ENCODE measurements at regions of chr11 and their contacts with region 1.

Region 1: DNA sequence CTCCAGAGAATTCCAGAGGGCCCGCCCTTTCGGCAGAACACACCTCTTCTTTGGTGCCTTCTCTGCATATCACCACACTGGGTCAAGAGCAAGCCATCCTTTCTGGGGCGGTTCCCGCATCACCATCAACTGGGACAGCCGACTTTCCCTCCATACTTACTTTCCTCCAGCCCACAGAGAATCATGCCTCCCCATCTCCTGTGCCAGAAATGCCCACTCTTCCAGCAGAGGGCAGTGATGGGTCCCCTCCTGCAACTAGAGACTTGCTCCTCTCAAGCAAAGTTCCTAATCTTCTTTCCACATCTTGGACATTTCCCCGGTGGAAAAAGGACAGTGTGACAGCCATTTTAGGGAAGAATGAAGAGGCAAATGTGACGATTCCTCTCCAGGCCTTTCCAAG is 157.7 kb downstream of the C11orf91 start:
- DNase-seq: peak; percentile 37 to 63
- ATAC-seq: peak; percentile 56 to 81 (median 72)
- H3K4me3 ChIP-seq: no peak overlapping the region
- H3K27ac ChIP-seq: no peak overlapping the region
- H3K4me1 ChIP-seq: no peaks in the 10 kb centered on the region
- H3K27me3 ChIP-seq: peaks cover 0 to 3% (median 0%) of the 10 kb centered on the region in 3 donors
- CTCF ChIP-seq: peak; percentile 65

Region 2: GRCh38 chr11:33067289-33067688 is 475.6 kb before region 1 on chr11:
- intact Hi-C with region 1: no loop called
- DNase-seq: no peak
- ATAC-seq: no peak
- H3K4me3 ChIP-seq: no peak overlapping the region
- H3K27ac ChIP-seq: no peak overlapping the region
- H3K4me1 ChIP-seq: no peaks in the 10 kb centered on the region
- H3K27me3 ChIP-seq: no peaks in the 10 kb centered on the region
- CTCF ChIP-seq: no peak

Region 3: DNA sequence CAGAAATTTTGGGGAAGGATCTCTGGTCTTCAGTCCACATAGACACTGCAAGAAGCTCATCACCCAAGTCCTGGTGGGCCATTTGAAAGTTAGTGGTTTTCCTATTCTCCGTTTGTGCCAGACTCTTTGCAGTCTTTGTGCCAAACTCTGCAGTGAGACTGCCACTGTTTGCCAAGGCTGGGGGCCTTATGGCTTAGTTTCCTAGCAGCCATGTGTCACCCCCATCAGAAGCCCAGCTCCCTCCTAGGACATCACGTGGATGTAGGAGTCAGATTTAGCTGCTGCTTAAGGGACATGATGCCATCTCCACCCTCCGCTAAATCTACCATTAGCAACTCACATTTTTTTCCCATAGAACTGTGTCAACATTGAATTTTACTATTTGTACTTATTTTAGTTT is 62.3 kb before region 1 on chr11:
- intact Hi-C with region 1: no loop called
- DNase-seq: no peak
- ATAC-seq: no peak
- H3K4me3 ChIP-seq: no peak overlapping the region
- H3K27ac ChIP-seq: no peak overlapping the region
- H3K4me1 ChIP-seq: no peaks in the 10 kb centered on the region
- H3K27me3 ChIP-seq: peaks cover 0 to 16% (median 2%) of the 10 kb centered on the region in 3 donors
- CTCF ChIP-seq: no peak

Region 4: GRCh38 chr11:33687733-33688479 is 145.0 kb after region 1 on chr11:
- intact Hi-C with region 1: loop called (anchors 2 to 5 kb)
- DNase-seq: no peak
- ATAC-seq: no peak
- H3K4me3 ChIP-seq: no peak overlapping the region
- H3K27ac ChIP-seq: no peak overlapping the region
- H3K4me1 ChIP-seq: peaks cover 10% of the 10 kb centered on the region
- H3K27me3 ChIP-seq: no peaks in the 10 kb centered on the region
- CTCF ChIP-seq: peak; percentile 68

Region 5: DNA sequence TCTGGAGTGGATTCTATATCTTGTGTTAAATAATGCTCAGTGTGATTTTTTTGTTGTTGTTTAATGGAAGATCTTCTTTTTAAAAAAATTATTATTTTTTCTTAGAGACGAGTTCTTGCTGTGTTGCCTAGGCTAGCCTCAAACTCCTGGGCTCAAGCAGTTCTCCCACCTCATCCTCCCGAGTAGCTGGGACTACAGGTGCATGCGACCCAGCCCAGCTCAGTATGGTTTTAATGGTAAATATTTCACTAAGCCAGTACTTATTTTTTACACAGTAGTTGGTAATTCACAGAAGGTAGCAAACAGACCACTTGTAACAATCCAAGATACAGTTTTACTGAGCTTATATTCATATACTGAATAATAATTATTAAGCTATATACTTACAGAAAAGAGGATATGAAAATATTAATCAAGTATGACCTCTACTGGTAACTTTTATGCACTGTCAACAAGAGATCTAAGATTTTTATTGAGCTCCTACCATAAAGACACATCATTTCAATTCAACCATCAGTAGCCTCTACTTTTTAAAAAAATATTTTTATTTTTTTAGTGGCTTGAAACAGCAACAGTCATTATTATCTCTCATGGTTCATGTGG is 199.4 kb after region 1 on chr11:
- intact Hi-C with region 1: loop called (anchors 2 kb)
- DNase-seq: no peak
- ATAC-seq: peak in 3 of 4 donors; percentile 41 to 73 (median 66)
- H3K4me3 ChIP-seq: no peak overlapping the region
- H3K27ac ChIP-seq: no peak overlapping the region
- H3K4me1 ChIP-seq: peaks cover 7% of the 10 kb centered on the region
- H3K27me3 ChIP-seq: no peaks in the 10 kb centered on the region
- CTCF ChIP-seq: peak; percentile 65

Region 6: GRCh38 chr11:33829433-33830141 is 286.7 kb after region 1 on chr11:
- intact Hi-C with region 1: loop called in 1 of 2 experiments (anchors 10 kb)
- DNase-seq: peak; percentile 40 to 61
- ATAC-seq: peak; percentile 78 to 97 (median 87)
- H3K4me3 ChIP-seq: peak overlapping the region; percentile 67
- H3K27ac ChIP-seq: no peak overlapping the region
- H3K4me1 ChIP-seq: no peaks in the 10 kb centered on the region
- H3K27me3 ChIP-seq: peaks cover 0 to 13% (median 5%) of the 10 kb centered on the region in 3 donors
- CTCF ChIP-seq: peak; percentile 85

Measured in psoas muscle (tissue), 8 donors.